ENCODE measurements at regions of chr1 and their contacts with region 1.

Region 1: GRCh38 chr1:51265618-51266017 is 29.5 kb downstream of the RNF11 start:
- DNase-seq: no peak
- ATAC-seq: no peak; the same call in 2 of the 3 replicates
- H3K4me3 ChIP-seq: no peak overlapping the region
- H3K27ac ChIP-seq: no peak overlapping the region
- H3K4me1 ChIP-seq: peaks cover 7 to 21% of the 10 kb centered on the region in 2 experiments; a peak in 4 of 5 replicates
- H3K27me3 ChIP-seq: no peaks in the 10 kb centered on the region
- CTCF ChIP-seq: no peak
- EP300 ChIP-seq: no peak
- POLR2A ChIP-seq: no peak
- RAD21 ChIP-seq: no peak

Region 2: DNA sequence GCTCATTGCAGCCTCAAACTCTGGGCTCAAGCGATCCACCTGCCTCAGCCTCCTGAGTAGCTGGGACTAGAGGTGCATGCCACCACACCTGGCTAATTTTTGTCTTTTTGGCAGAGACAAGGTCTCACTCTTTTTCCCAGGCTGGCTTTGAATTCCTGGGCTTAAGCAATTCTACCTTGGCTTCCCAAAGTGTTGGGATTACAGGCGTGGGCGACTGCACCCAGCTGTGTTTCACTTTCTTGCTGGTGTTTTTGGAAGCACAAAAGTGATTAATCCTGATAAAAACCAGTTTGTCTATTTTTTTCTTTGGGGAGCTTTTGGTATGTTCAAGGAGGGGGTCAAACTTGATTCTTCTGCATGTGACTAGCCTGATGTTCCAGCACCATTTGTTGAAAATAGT is 10.3 kb before region 1 on chr1:
- CTCF ChIA-PET with region 1: no interaction called
- POLR2A ChIA-PET with region 1: interaction called, 11 read pairs
- in situ Hi-C with region 1: no loop called
- intact Hi-C with region 1: no loop called
- DNase-seq: no peak
- ATAC-seq: no peak
- H3K4me3 ChIP-seq: no peak overlapping the region
- H3K27ac ChIP-seq: no peak overlapping the region
- H3K4me1 ChIP-seq: peaks cover 0 to 6% of the 10 kb centered on the region in 2 experiments; a peak in 2 of 5 replicates
- H3K27me3 ChIP-seq: no peaks in the 10 kb centered on the region
- CTCF ChIP-seq: no peak
- EP300 ChIP-seq: no peak
- POLR2A ChIP-seq: no peak
- RAD21 ChIP-seq: no peak

Region 3: GRCh38 chr1:51636764-51637522 is 371.3 kb after region 1 on chr1:
- CTCF ChIA-PET with region 1: no interaction called
- POLR2A ChIA-PET with region 1: no interaction called
- in situ Hi-C with region 1: no loop called
- intact Hi-C with region 1: no loop called
- DNase-seq: peak in 1 of 4 experiments; percentile 61
- ATAC-seq: peak; percentile 16
- H3K4me3 ChIP-seq: no peak overlapping the region
- H3K27ac ChIP-seq: peak overlapping the region; percentile 32; the same call in 2 of the 3 replicates
- H3K4me1 ChIP-seq: peaks cover 3 to 19% of the 10 kb centered on the region in 2 experiments; a peak in 3 of 5 replicates
- H3K27me3 ChIP-seq: no peaks in the 10 kb centered on the region
- CTCF ChIP-seq: no peak
- EP300 ChIP-seq: no peak
- POLR2A ChIP-seq: no peak
- RAD21 ChIP-seq: no peak

Measured in K562 (cell line).